Activated T-helper 1 cell treated with anti-CD3 and anti-CD28 coated beads, Interleukin-12 subunit alpha, Interleukin-12 subunit beta, Interleukin-2, Interleukin-4 antibody, amounts not matched to agents 30 ng/mL and 10 ng/mL and 1 ng/mL, durations not matched to agents 14 hours and 24 hours and 36 hours (primary cell): ENCODE measurements at regions of chr7 and their contacts with region 1.

Region 1: GRCh38 chr7:12686894-12687717 is at the start of gene ARL4A:
- DNase-seq: peak; percentile 90
- H3K4me3 Mint-ChIP-seq: peak within 1 kb of the TSS; percentile 95
- H3K27ac Mint-ChIP-seq: peak within 1 kb of the TSS; percentile 87
- H3K4me1 Mint-ChIP-seq: peaks cover 32% of the 10 kb centered on the region
- H3K27me3 Mint-ChIP-seq: no peaks in the 10 kb centered on the region
- total RNA-seq, gene ARL4A: 9.5 and 10.2 TPM in 2 replicates

Region 2: DNA sequence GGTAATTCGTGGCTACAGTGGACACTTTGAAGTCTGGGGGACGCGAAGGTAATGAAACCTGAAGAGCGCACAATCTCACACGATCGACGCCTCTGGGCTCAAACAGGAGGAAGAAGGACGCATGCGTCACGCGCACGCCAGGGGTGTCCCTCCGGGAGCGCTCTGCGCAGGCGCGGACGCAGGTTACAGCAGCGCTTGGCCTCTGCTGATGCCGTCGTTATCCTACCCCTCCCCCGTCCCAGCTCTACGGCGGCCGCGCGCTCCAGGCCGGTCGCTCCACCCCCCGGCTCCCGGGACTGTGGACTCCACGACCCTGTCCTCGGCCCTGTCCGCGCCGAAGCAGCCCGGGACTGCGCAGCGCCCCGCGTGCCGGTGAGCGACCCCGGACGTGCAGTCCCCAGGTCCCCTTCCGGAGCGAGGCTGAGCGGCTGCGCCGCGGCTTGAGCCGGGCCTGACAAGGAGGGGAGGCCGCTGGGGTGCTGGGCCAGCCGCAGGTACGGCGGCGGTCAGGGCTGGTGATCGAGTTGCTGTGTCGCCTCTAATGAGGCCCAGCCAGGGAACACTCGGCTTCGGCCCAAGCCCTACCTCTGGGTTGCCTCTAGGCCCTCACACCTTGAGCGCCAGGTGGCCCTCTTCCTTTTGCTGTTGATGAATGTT is 475.9 kb before region 1 on chr7 and contains the start of gene TMEM106B:
- intact Hi-C with region 1: loop called (anchors 1 kb)
- DNase-seq: peak; percentile 96
- H3K4me3 Mint-ChIP-seq: peak within 1 kb of the TSS; percentile 98
- H3K27ac Mint-ChIP-seq: peak within 1 kb of the TSS; percentile 98
- H3K4me1 Mint-ChIP-seq: peaks cover 35% of the 10 kb centered on the region
- H3K27me3 Mint-ChIP-seq: peaks cover 17% of the 10 kb centered on the region
- total RNA-seq, gene TMEM106B: 23.4 and 25.1 TPM in 2 replicates

Region 3: GRCh38 chr7:12638851-12639467 is 48.1 kb before region 1 on chr7:
- intact Hi-C with region 1: loop called (anchors 1 kb)
- DNase-seq: no peak
- H3K4me3 Mint-ChIP-seq: no peak overlapping the region
- H3K27ac Mint-ChIP-seq: no peak overlapping the region
- H3K4me1 Mint-ChIP-seq: peaks cover 16% of the 10 kb centered on the region
- H3K27me3 Mint-ChIP-seq: peaks cover 4% of the 10 kb centered on the region

Region 4: DNA sequence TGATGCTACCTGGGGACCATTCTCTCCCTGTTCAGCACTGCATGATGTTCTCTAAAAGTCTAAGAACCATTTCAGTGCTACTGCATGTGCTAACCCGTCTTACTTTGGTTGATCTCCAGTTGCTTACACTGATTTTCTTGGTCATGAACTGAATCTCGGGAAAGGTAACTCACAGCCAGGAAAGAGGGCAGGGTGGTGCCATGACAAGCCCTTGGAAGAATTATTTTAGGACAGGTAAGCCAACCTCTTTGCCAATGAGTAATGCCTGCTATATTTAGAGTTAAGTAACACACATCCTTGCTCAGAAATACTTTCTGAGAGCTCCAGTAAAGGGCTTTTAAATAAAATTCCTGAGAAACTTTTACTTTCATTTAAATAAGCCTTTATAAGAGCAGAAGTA is 127.0 kb after region 1 on chr7:
- intact Hi-C with region 1: loop called (anchors 10 kb)
- DNase-seq: no peak
- H3K4me3 Mint-ChIP-seq: no peak overlapping the region
- H3K27ac Mint-ChIP-seq: no peak overlapping the region
- H3K4me1 Mint-ChIP-seq: no peaks in the 10 kb centered on the region
- H3K27me3 Mint-ChIP-seq: peaks cover 7% of the 10 kb centered on the region

Region 5: GRCh38 chr7:13091974-13092707 is 405.0 kb after region 1 on chr7:
- intact Hi-C with region 1: no loop called
- DNase-seq: no peak
- H3K4me3 Mint-ChIP-seq: no peak overlapping the region
- H3K27ac Mint-ChIP-seq: no peak overlapping the region
- H3K4me1 Mint-ChIP-seq: no peaks in the 10 kb centered on the region
- H3K27me3 Mint-ChIP-seq: peaks cover 3% of the 10 kb centered on the region

Region 6: DNA sequence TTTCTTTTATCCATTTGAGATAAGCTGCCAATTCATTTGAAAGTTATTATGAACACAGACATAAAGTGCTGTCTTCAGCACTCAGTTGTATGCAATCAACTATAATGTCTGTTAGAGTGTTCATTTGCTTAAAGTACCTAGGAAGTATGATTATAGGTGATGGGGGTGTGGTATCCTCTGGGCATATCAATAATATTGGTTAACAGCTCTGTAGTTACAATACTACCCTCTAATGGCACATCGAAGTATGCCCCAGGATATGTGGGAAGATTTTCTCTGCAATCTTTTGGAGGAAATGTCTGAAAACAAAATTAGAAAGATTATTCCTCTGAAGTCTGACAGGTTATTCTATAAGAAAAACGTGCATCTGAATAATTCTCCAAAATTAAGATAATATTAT is 430.0 kb after region 1 on chr7:
- intact Hi-C with region 1: loop called (anchors 10 kb)
- DNase-seq: no peak
- H3K4me3 Mint-ChIP-seq: no peak overlapping the region
- H3K27ac Mint-ChIP-seq: no peak overlapping the region
- H3K4me1 Mint-ChIP-seq: no peaks in the 10 kb centered on the region
- H3K27me3 Mint-ChIP-seq: no peaks in the 10 kb centered on the region

Region 7: GRCh38 chr7:13262929-13263530 is 575.9 kb after region 1 on chr7:
- intact Hi-C with region 1: loop called (anchors 2 kb)
- DNase-seq: no peak
- H3K4me3 Mint-ChIP-seq: no peak overlapping the region
- H3K27ac Mint-ChIP-seq: no peak overlapping the region
- H3K4me1 Mint-ChIP-seq: no peaks in the 10 kb centered on the region
- H3K27me3 Mint-ChIP-seq: no peaks in the 10 kb centered on the region